Breast epithelium (tissue), 4 donors: ENCODE measurements at regions of chr3 and their contacts with region 1.

Region 1: DNA sequence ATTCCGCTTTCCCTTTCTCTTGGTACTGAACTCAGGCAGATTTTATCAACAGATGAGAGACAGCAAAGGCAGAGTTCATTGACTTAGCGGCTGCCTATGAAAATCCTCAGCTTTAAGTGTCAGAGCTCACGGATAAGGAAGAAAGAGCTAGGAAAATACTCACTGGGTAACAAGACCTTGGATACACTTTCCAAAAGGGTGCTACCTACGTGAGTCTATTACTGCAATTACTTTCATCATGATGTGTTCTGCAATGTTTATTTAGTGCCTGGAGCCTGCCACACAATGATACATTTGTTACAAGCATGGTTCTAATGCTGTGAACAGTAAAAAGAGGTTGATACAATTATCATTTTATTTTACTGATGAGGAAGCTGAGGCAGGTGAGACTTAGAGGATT is 177.5 kb downstream of the GRM7 start:
- DNase-seq: no peak
- H3K4me3 ChIP-seq: no peak overlapping the region
- H3K27ac ChIP-seq: no peak overlapping the region
- H3K4me1 ChIP-seq: no peaks in the 10 kb centered on the region
- H3K27me3 ChIP-seq: no peaks in the 10 kb centered on the region
- CTCF ChIP-seq: no peak
- POLR2A ChIP-seq: no peak

Region 2: DNA sequence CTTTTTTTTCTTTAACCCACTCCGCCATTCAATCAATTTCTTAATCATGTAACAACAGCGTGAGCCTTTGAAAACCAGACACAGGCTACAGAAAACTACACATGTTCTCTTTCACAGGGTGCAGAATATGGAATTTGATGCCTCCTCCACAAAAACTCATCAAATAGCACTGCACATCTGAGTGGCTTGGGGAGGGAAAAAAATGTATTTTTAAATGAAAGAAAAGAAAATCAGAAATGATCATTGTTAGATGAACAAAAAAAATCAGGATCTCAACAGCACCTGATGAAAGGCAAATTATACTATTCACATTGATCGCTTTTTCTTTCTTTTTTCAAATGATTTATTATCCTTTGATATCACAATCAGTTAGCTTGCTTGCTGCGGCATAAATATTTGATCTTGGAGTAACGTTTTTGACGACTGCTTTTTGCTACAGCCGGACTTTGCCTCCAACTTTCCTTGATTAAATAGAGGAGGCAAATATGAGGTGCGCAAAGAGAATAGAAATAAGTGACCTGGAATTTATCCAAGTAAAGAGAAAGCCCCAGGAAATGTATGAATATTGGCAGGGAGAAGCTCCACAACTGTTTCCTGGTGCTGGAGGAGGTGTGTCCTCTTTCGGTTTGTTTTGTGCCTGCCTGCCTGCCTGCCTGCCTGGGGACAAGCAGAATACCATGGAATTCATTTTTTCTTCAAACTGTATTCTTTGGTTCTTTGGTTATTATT is 1787.8 kb before region 1 on chr3:
- intact Hi-C with region 1: loop called (anchors 10 kb)
- DNase-seq: peak in 1 of 2 donors; percentile 20
- H3K4me3 ChIP-seq: peak overlapping the region; percentile 22 to 59 (median 44)
- H3K27ac ChIP-seq: peak overlapping the region; percentile 42 to 57
- H3K4me1 ChIP-seq: no peaks in the 10 kb centered on the region
- H3K27me3 ChIP-seq: no peaks in the 10 kb centered on the region
- CTCF ChIP-seq: no peak
- POLR2A ChIP-seq: no peak

Region 3: GRCh38 chr3:5431811-5432378 is 1606.5 kb before region 1 on chr3:
- intact Hi-C with region 1: no loop called
- DNase-seq: no peak
- H3K4me3 ChIP-seq: no peak overlapping the region
- H3K27ac ChIP-seq: no peak overlapping the region
- H3K4me1 ChIP-seq: no peaks in the 10 kb centered on the region
- H3K27me3 ChIP-seq: no peaks in the 10 kb centered on the region
- CTCF ChIP-seq: no peak
- POLR2A ChIP-seq: no peak

Region 4: DNA sequence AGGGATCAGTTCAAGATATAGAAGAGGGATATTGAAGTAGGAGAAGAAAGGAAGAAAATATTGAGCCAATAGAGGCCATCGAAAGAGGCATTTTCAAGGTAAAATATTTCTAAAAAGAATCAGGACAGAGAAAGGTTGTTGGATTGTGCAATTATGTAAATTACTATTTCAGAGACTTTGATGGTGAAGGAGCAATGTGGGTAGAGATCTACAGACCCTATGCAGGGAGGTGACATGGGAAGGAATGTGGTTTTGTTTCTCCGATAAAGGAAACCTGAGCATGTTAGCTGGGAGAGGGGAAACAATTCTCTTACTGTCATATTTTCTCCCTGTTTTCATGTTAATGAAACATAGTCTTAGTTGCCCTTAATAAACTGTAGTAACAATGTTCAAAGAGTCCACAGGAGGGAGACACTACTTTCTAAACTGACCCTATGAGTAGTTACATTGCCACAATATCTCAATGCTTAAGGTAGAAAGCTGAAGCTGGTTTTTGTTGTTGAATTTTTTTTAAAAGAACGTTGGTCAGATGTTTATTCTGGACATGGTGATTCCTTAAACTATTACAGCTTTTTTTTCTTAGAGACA is 44.2 kb before region 1 on chr3:
- intact Hi-C with region 1: no loop called
- DNase-seq: no peak
- H3K4me3 ChIP-seq: no peak overlapping the region
- H3K27ac ChIP-seq: no peak overlapping the region
- H3K4me1 ChIP-seq: no peaks in the 10 kb centered on the region
- H3K27me3 ChIP-seq: no peaks in the 10 kb centered on the region
- CTCF ChIP-seq: peak in 1 of 3 donors; percentile 26
- POLR2A ChIP-seq: no peak